CD8-positive, alpha-beta T cell (primary cell): ENCODE measurements at regions of chr1 and their contacts with region 1.

Region 1: DNA sequence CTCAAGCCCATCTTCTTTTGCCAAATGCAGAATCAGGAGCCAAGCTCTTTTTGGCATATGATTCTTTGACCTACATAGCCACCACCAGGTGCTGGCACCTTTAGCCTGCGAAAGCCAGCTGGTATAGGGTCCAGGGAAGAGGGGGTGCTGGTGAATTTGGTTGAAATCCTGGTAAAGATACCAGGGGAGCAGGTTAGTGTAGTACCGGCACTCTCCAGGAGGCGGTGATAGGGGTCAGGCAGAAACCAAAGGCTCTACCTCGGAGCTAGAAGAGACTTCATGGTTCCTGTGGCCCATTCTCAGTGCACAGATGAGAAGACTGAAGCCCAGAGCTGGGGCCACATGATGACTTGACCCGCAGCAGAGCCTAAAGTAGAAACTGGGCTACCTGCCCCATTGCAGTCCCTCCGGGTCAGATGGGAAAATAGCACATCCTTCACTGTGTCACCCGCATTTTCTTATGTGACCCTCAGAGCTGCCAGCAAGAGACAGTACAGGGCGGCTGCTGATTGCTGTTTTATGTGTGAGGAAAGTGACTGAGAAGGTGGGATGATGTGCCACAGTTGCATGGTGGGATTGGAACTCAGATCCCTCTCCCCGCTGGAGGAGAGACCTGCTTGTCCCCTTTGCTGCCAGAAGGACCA is 36.0 kb upstream of the IL19 start:
- DNase-seq: peak; percentile 66 to 87 (median 82)
- ATAC-seq: peak; percentile 57
- H3K4me3 ChIP-seq: no peak overlapping the region
- H3K4me3 Mint-ChIP-seq: no peak overlapping the region
- H3K27ac ChIP-seq: peak overlapping the region in 1 of 2 experiments; percentile 54
- H3K27ac Mint-ChIP-seq: peak overlapping the region; percentile 91
- H3K4me1 ChIP-seq: peaks cover 55% of the 10 kb centered on the region
- H3K4me1 Mint-ChIP-seq: peaks cover 55% of the 10 kb centered on the region
- H3K27me3 ChIP-seq: no peaks in the 10 kb centered on the region
- H3K27me3 Mint-ChIP-seq: no peaks in the 10 kb centered on the region
- CTCF ChIP-seq: peak; percentile 90

Region 2: DNA sequence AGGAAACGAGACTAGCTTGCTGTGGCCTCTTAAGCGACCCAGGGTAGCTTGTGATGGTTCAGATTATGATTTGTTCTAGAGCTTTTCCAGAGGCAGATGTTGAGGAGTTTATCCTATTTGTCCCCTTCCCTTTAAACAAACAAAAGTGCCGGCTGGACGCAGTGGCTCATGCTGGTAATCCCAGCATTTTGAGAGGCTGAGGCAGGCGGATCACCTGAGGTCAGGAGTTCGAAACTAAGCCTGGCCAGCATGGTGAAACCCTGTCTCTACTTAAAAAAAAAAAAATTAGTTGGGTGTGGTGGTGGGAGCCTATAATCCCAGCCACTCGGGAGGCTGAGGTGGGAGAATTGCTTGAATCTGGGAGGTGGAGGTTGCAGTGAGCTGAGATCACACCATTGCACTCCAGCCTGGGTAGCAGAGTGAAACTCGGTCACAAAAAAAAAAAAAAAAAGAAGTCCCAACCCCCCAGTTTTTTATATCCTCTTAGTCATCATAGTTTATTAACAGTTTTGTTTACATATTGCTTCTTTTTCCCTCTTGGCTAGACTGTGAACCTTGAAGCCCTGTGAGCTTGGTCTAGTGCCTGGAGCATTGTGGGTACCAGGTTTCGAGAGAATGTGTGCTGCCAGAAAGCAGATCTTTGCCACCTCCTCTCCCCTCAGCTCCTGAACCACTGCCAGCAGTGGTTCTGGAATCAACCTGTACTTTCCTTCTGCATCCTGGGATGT is 20.1 kb before region 1 on chr1:
- CTCF ChIA-PET with region 1: interaction called, 11 read pairs
- POLR2A ChIA-PET with region 1: interaction called, 3 read pairs
- intact Hi-C with region 1: no loop called
- DNase-seq: peak in 3 of 9 experiments; percentile 58 to 82 (median 72)
- ATAC-seq: peak; percentile 62
- H3K4me3 ChIP-seq: no peak overlapping the region
- H3K4me3 Mint-ChIP-seq: peak overlapping the region; percentile 35
- H3K27ac ChIP-seq: peak overlapping the region in 1 of 2 experiments; percentile 69
- H3K27ac Mint-ChIP-seq: peak overlapping the region; percentile 95
- H3K4me1 ChIP-seq: peaks cover 58% of the 10 kb centered on the region
- H3K4me1 Mint-ChIP-seq: peaks cover 84% of the 10 kb centered on the region
- H3K27me3 ChIP-seq: no peaks in the 10 kb centered on the region
- H3K27me3 Mint-ChIP-seq: no peaks in the 10 kb centered on the region
- CTCF ChIP-seq: no peak

Region 3: DNA sequence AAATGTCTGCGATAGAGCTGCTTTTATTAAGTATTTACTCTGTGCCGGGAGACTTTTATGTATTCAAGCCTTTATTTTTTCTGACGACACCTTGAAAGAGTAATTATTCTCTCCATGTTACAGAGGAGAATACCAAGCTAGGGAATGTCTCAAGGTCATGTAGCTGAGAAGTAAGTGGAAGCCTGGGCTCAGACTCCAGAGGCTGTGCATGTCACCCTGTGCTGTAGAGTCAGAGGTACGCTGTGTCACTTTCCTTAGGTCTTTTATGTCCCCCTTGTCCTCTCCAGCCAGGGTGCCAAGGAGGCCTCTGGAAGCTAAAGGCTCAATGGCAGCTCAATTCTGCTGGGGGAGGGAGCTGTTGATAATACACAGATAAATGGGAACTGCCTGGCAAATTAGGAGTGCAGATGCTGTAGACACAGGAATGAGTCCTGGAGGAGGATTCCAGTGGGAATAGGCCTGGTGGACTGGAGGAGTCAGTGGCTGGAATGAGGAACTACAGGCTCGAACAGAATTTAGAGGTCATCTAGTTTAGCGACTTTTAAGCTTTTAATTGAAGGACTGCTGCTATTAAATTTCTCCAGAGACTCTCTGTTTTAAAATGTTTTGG is 26.6 kb after region 1 on chr1:
- CTCF ChIA-PET with region 1: interaction called, 117 read pairs
- POLR2A ChIA-PET with region 1: interaction called, 15 read pairs
- intact Hi-C with region 1: loop called (anchors 2 kb)
- DNase-seq: no peak
- ATAC-seq: no peak
- H3K4me3 ChIP-seq: no peak overlapping the region
- H3K4me3 Mint-ChIP-seq: no peak overlapping the region
- H3K27ac ChIP-seq: no peak overlapping the region
- H3K27ac Mint-ChIP-seq: no peak overlapping the region
- H3K4me1 ChIP-seq: peaks cover 59% of the 10 kb centered on the region
- H3K4me1 Mint-ChIP-seq: peaks cover 33% of the 10 kb centered on the region
- H3K27me3 ChIP-seq: no peaks in the 10 kb centered on the region
- H3K27me3 Mint-ChIP-seq: no peaks in the 10 kb centered on the region
- CTCF ChIP-seq: no peak

Region 4: GRCh38 chr1:206803221-206803730 is 68.7 kb after region 1 on chr1:
- CTCF ChIA-PET with region 1: interaction called, 628 read pairs
- POLR2A ChIA-PET with region 1: interaction called, 75 read pairs
- intact Hi-C with region 1: loop called (anchors 1 kb)
- DNase-seq: peak; percentile 59 to 98 (median 74)
- ATAC-seq: peak; percentile 91
- H3K4me3 ChIP-seq: no peak overlapping the region
- H3K4me3 Mint-ChIP-seq: peak overlapping the region; percentile 40
- H3K27ac ChIP-seq: peak overlapping the region; percentile 51 to 83
- H3K27ac Mint-ChIP-seq: peak overlapping the region; percentile 96
- H3K4me1 ChIP-seq: peaks cover 46% of the 10 kb centered on the region
- H3K4me1 Mint-ChIP-seq: peaks cover 71% of the 10 kb centered on the region
- H3K27me3 ChIP-seq: no peaks in the 10 kb centered on the region
- H3K27me3 Mint-ChIP-seq: no peaks in the 10 kb centered on the region
- CTCF ChIP-seq: no peak

Region 5: DNA sequence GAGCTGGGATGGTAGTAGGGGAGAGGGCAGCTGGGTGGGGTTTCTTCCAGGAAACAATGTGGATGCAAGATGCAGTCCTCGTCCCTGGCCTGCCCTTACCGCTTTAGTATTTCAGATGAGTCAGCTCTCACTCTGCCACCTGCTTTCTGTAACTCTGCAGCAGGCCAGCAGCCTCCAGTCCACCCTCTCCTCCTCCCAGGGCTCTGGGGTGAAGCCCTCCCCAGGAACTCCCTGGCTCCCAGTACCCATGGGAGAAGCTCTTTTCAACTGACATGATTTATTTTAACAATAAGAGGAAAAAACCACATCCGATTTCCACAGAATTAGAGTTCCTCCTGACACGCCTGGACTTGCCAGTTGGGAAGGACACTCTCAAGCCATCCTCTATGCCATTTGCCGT is 91.8 kb after region 1 on chr1:
- CTCF ChIA-PET with region 1: interaction called, 17 read pairs
- POLR2A ChIA-PET with region 1: interaction called, 4 read pairs
- intact Hi-C with region 1: no loop called
- DNase-seq: no peak
- ATAC-seq: no peak
- H3K4me3 ChIP-seq: no peak overlapping the region
- H3K4me3 Mint-ChIP-seq: no peak overlapping the region
- H3K27ac ChIP-seq: no peak overlapping the region
- H3K27ac Mint-ChIP-seq: no peak overlapping the region
- H3K4me1 ChIP-seq: peaks cover 22% of the 10 kb centered on the region
- H3K4me1 Mint-ChIP-seq: peaks cover 47% of the 10 kb centered on the region
- H3K27me3 ChIP-seq: peaks cover 0 to 2% of the 10 kb centered on the region in 2 experiments
- H3K27me3 Mint-ChIP-seq: no peaks in the 10 kb centered on the region
- CTCF ChIP-seq: no peak

Region 6: GRCh38 chr1:206856674-206857464 is 122.2 kb after region 1 on chr1:
- CTCF ChIA-PET with region 1: interaction called, 23 read pairs
- POLR2A ChIA-PET with region 1: no interaction called
- intact Hi-C with region 1: no loop called
- DNase-seq: peak in 4 of 9 experiments; percentile 16 to 53 (median 28)
- ATAC-seq: peak; percentile 55
- H3K4me3 ChIP-seq: no peak overlapping the region
- H3K4me3 Mint-ChIP-seq: no peak overlapping the region
- H3K27ac ChIP-seq: no peak overlapping the region
- H3K27ac Mint-ChIP-seq: no peak overlapping the region
- H3K4me1 ChIP-seq: peaks cover 4% of the 10 kb centered on the region
- H3K4me1 Mint-ChIP-seq: peaks cover 13% of the 10 kb centered on the region
- H3K27me3 ChIP-seq: no peaks in the 10 kb centered on the region
- H3K27me3 Mint-ChIP-seq: no peaks in the 10 kb centered on the region
- CTCF ChIP-seq: peak; percentile 33

Region 7: DNA sequence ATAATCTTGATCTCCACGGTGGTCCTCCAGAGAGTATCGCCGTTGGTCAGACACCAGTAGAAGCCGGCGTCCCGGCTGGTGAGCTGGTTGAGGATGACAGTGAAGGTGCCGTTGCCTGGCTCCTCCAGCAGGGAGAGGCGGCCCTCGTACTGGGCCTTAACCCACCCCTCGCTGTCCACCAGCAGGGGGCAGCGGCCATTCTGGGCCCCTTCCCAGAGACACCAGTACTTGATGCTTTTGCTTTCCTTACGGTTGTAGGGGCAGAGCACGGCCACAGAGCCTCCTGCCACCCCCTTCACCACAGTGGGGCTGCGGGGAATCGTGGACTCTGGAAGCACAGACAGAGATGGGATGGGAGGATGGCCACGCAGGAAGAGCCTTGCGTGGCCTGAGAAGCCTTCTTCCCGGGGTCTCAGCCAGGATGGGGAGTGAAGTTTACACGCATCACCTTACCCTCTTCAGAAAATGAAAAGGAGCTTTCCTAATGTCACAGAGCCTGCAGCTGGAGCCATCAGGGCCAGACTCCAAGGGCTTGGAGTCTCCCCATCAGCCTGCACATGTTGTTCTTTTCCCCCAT is 201.0 kb after region 1 on chr1:
- CTCF ChIA-PET with region 1: interaction called, 63 read pairs
- POLR2A ChIA-PET with region 1: interaction called, 5 read pairs
- intact Hi-C with region 1: loop called in 1 of 2 experiments (anchors 1 kb)
- DNase-seq: peak in 6 of 9 experiments; percentile 41 to 65 (median 52)
- ATAC-seq: peak; percentile 45
- H3K4me3 ChIP-seq: no peak overlapping the region
- H3K4me3 Mint-ChIP-seq: no peak overlapping the region
- H3K27ac ChIP-seq: no peak overlapping the region
- H3K27ac Mint-ChIP-seq: no peak overlapping the region
- H3K4me1 ChIP-seq: peaks cover 20% of the 10 kb centered on the region
- H3K4me1 Mint-ChIP-seq: peaks cover 26% of the 10 kb centered on the region
- H3K27me3 ChIP-seq: no peaks in the 10 kb centered on the region
- H3K27me3 Mint-ChIP-seq: no peaks in the 10 kb centered on the region
- CTCF ChIP-seq: peak; percentile 48